ENCODE measurements at regions of chr10 and their contacts with region 1.

Region 1: DNA sequence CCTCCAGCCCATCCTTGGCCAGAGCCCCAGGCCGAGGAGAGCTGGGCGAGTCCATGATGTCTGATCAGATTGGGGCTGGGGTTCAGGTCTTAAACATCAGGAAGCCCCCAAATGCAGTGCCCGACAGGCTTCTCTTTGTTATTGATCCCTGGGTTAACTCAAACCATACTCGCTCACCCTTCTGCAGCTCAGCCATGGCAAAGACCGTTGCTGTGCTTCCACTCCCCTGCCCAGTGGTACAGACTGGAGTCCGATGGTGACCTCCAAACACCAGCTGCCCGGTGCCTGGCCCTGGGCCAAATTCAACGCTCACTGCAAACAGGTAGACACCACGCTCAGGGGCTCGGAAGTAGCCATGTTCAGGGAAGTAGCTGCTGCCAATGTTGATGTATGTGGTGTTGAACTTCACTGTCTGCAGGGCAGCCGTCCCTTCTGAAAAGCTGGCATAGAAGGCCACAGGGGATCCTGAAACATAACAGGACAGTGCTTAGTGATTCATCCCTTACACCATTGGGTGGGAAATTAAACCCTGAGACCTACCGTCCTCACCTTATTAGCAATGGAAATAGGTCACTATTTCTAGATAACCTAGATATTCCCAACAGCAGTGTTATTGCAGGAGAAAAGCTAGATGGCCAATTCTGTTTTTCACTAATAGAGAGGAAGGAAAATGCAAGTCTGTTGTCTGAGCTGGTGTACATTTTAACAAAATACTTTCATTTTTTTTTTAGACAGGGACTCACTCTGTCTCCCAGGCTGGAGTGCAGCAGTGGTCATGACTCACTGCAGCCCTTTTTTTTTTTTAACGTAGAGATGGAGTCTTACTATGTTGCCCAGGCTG is 20.5 kb downstream of the MMRN2 start:
- DNase-seq: no peak
- H3K4me3 ChIP-seq: no peak overlapping the region
- H3K27ac ChIP-seq: no peak overlapping the region
- H3K27me3 ChIP-seq: no peaks in the 10 kb centered on the region
- CTCF ChIP-seq: no peak

Region 2: GRCh38 chr10:86556568-86557276 is 380.2 kb before region 1 on chr10:
- CTCF ChIA-PET with region 1: no interaction called
- POLR2A ChIA-PET with region 1: no interaction called
- DNase-seq: no peak
- H3K4me3 ChIP-seq: no peak overlapping the region
- H3K27ac ChIP-seq: no peak overlapping the region
- H3K27me3 ChIP-seq: peaks cover 3% of the 10 kb centered on the region
- CTCF ChIP-seq: no peak

Region 3: GRCh38 chr10:86661161-86662025 is 275.5 kb before region 1 on chr10:
- CTCF ChIA-PET with region 1: interaction called, 15 read pairs
- POLR2A ChIA-PET with region 1: no interaction called
- DNase-seq: no peak
- H3K4me3 ChIP-seq: no peak overlapping the region
- H3K27ac ChIP-seq: no peak overlapping the region
- H3K27me3 ChIP-seq: peaks cover 3% of the 10 kb centered on the region
- CTCF ChIP-seq: no peak

Region 4: GRCh38 chr10:86699991-86700840 is 236.7 kb before region 1 on chr10:
- CTCF ChIA-PET with region 1: interaction called, 16 read pairs
- POLR2A ChIA-PET with region 1: no interaction called
- DNase-seq: no peak
- H3K4me3 ChIP-seq: no peak overlapping the region
- H3K27ac ChIP-seq: no peak overlapping the region
- H3K27me3 ChIP-seq: peaks cover 2% of the 10 kb centered on the region
- CTCF ChIP-seq: no peak

Region 5: DNA sequence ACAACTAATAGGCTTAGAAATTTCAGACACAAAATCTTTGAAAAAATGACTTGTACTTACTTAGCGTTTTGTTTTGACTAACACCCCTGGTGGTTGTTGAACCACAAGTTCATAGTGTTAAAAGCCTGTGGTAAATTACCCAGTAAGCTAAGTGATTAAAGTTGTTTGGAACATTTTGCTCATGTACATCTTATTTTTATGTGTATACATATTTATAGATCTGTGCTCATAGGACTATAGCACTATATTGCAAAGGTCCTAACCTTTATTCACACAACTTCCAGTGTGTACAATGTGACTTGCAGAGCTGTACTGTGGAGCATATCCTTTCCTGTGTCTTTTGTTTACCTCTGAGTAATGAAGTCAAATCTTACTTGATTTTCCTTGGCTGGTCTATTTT is 100.8 kb before region 1 on chr10:
- CTCF ChIA-PET with region 1: no interaction called
- POLR2A ChIA-PET with region 1: interaction called, 15 read pairs
- DNase-seq: no peak
- H3K4me3 ChIP-seq: no peak overlapping the region
- H3K27ac ChIP-seq: no peak overlapping the region
- H3K27me3 ChIP-seq: no peaks in the 10 kb centered on the region
- CTCF ChIP-seq: no peak

Region 6: GRCh38 chr10:86953747-86954680 is 17.1 kb after region 1 on chr10:
- CTCF ChIA-PET with region 1: interaction called, 14 read pairs
- POLR2A ChIA-PET with region 1: no interaction called
- DNase-seq: no peak
- H3K4me3 ChIP-seq: no peak overlapping the region
- H3K27ac ChIP-seq: no peak overlapping the region
- H3K27me3 ChIP-seq: no peaks in the 10 kb centered on the region
- CTCF ChIP-seq: no peak

Region 7: GRCh38 chr10:86970162-86970981 is 33.5 kb after region 1 on chr10:
- CTCF ChIA-PET with region 1: interaction called, 17 read pairs
- POLR2A ChIA-PET with region 1: interaction called, 4 read pairs
- DNase-seq: no peak
- H3K4me3 ChIP-seq: peak overlapping the region; percentile 70
- H3K27ac ChIP-seq: peak overlapping the region; percentile 97
- H3K27me3 ChIP-seq: no peaks in the 10 kb centered on the region
- CTCF ChIP-seq: no peak

Region 8: DNA sequence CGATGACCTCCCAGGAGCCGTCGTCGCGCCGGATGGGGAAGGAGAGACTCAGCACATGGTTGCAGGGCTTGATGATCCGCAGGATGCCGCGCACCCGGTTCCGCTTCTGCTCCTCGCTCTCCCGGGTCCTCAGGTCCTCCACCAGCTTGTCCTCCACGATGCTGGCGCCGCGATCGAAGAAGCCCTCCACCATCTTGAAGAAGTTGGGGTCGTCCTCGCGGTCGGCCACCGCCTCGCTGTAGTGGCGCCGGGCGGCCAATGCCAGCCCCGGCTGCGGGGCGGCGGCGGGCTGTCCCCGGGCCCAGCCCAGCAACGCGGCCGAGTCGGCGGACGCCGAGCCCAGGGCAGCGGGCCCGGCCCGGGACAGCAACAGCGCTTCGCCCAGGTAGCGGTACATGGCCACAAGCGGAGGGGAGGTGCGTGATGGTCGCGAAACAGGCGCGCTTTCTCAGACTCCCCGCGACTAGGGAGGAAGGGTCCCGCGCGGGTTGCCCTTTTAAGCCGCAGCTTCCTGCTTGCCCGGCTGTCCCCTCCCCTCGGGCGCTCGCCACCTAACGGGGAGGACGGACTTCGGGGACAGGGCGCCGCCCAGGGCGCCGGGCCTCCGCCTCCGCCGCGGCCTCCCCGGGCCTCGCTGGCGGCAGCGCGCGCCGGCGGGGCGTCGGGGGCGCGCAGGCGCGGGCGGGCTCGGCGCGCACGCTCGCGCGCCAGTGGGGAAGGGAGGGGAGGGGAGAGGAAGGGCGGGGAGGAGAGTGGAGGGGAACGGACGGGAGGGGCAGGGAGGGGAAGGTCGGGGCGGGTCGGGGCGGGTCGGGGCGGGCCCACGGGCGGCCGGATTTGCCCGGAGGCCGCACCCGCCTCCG is 157.7 kb after region 1 on chr10 and contains the starts of genes GLUD1 and SHLD2:
- CTCF ChIA-PET with region 1: interaction called, 23 read pairs
- POLR2A ChIA-PET with region 1: no interaction called
- DNase-seq: peak; percentile 52
- H3K4me3 ChIP-seq: peak within 1 kb of the TSS; percentile 80
- H3K27ac ChIP-seq: peak within 1 kb of the TSS; percentile 81
- H3K27me3 ChIP-seq: no peaks in the 10 kb centered on the region
- CTCF ChIP-seq: 0 out of 2 replicates have a peak, but pooled peaks have one; percentile 10
- polyA plus RNA-seq, gene GLUD1: 108 and 127 TPM in 2 replicates
- polyA plus RNA-seq, gene SHLD2: 18.0 and 24.2 TPM in 2 replicates